Tibial artery (tissue), 4 donors: ENCODE measurements at regions of chr9 and their contacts with region 1.

Region 1: GRCh38 chr9:136533775-136534157 is 12.1 kb downstream of the NOTCH1 start:
- DNase-seq: peak in 1 of 2 donors; percentile 46
- H3K4me3 ChIP-seq: no peak overlapping the region
- H3K27ac ChIP-seq: no peak overlapping the region
- H3K4me1 ChIP-seq: peaks cover 0 to 67% (median 38%) of the 10 kb centered on the region in 4 donors
- H3K27me3 ChIP-seq: no peaks in the 10 kb centered on the region
- CTCF ChIP-seq: no peak

Region 2: DNA sequence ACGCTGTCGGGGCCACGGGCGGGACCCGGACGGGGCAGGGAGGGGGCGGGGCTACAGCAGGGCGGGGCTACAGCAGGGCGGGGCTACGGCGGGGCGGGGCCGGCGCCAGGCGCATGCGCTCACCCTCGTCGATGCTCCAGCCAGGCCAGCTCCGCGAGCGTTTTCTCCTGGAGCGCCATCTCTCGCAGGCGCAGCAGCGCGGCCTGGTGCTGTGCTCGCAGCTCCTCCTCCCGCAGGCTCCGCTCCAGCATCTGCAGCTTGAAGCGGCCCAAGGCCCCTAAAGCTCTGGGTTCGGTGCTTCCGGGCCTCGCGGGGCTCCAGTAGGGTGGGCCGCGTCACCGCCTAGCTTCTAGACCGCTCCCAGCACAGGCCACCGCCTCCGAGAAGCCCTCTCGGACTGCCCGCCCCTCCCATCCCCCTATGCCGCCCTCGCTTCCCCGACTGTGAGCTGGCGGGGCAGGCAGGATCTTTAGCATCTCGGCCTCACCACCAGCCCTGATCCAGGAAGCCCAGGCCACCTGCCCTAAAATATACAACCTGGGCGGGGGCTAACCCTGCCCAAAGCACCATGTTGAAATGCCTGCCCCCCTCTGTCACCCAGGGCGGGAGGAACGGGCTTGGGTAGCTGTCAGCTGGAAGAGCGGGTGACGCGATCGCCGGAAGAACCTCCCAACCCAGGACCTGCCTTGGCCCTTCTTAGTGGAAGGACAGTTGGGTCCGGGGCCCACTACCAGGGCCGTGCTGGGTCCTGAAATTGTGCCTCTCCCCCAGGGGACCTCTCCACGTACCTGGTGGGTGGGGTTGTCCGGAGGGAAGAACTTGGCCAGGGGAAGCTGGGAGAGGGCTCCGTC is 266.3 kb before region 1 on chr9:
- intact Hi-C with region 1: no loop called
- DNase-seq: peak; percentile 54 to 81
- H3K4me3 ChIP-seq: peak overlapping the region; percentile 36 to 53
- H3K27ac ChIP-seq: no peak overlapping the region
- H3K4me1 ChIP-seq: peaks cover 0 to 10% (median 8%) of the 10 kb centered on the region in 4 donors
- H3K27me3 ChIP-seq: peaks cover 0 to 52% of the 10 kb centered on the region in 2 donors
- CTCF ChIP-seq: no peak

Region 3: GRCh38 chr9:136363606-136364370 is 170.0 kb before region 1 on chr9 and contains the start of gene DNLZ:
- intact Hi-C with region 1: no loop called
- DNase-seq: peak; percentile 74 to 89
- H3K4me3 ChIP-seq: peak within 1 kb of the TSS; percentile 87 to 99
- H3K27ac ChIP-seq: peak within 1 kb of the TSS; percentile 90 to 91
- H3K4me1 ChIP-seq: peaks cover 0 to 35% (median 16%) of the 10 kb centered on the region in 4 donors
- H3K27me3 ChIP-seq: peaks cover 0 to 9% of the 10 kb centered on the region in 2 donors
- CTCF ChIP-seq: peak; percentile 98

Region 4: GRCh38 chr9:136493567-136493971 is 40.2 kb before region 1 on chr9:
- intact Hi-C with region 1: loop called (anchors 5 kb)
- DNase-seq: no peak
- H3K4me3 ChIP-seq: no peak overlapping the region
- H3K27ac ChIP-seq: no peak overlapping the region
- H3K4me1 ChIP-seq: peaks cover 0 to 11% (median 2%) of the 10 kb centered on the region in 4 donors
- H3K27me3 ChIP-seq: no peaks in the 10 kb centered on the region
- CTCF ChIP-seq: no peak

Region 5: DNA sequence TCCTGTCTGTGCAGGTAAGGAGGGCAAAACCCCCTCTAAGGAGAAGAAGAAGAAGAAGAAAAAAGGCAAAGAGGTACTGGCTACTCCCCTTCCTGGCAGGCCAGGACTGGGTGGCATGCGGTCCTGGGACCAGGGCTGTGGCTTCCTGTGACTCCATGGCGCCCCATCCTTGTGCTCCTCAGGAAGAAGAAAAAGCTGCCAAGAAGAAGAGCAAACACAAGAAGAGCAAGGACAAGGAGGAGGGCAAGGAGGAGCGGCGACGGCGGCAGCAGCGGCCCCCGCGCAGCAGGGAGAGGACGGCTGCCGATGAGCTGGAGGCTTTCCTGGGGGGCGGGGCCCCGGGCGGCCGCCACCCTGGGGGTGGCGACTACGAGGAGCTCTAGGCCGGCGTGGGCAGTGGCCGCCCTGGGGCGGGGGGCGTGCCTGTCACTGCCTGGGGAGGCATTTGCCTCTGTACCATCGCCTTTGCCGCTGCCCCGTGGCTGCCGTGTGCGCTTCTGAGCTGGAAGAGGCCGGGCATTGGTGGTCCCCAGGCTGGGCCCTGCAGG is 306.4 kb after region 1 on chr9:
- intact Hi-C with region 1: no loop called
- DNase-seq: no peak
- H3K4me3 ChIP-seq: no peak overlapping the region
- H3K27ac ChIP-seq: no peak overlapping the region
- H3K4me1 ChIP-seq: peaks cover 0 to 49% (median 33%) of the 10 kb centered on the region in 4 donors
- H3K27me3 ChIP-seq: peaks cover 3 to 25% of the 10 kb centered on the region in 2 donors
- CTCF ChIP-seq: no peak